CD8-positive, alpha-beta memory T cell (primary cell): ENCODE measurements at regions of chr20 and their contacts with region 1.

Region 1: DNA sequence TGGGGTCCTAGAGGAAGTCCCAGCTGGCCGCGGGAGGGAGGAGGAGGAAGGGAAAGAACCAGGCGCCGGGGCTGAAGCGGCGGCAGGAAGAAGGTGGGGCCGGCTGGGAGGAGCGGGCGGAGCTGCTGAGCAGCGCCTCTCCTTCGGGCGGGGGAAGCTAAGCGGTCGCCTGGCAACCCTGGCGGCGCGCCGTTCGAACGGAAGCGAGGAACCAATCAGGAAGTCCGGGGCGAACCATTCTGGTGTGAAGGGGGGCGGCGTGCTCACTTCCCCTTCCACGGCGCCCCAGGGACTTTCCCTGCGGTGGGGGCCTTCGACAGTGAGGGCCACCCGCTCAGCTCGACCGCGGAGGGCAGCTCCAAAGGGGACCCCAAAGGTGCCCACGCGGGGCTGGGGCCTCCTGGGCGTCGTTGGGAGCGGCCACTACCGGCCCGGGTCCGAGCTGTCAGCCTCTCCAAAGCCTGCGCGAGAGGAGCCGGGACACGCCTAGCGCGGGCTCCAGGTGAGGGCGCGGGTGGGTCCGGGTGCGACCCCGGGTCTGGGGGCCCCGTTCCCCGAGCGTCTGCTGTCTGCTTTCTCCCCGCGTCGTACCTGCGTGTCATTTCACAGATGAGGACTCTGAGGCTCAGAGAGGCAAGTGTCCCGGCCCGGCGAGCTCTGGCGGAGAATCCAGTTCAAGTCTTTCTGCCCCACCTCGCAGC is at the start of gene FAM110A:
- DNase-seq: peak; percentile 93 to 97 (median 95)
- H3K4me3 ChIP-seq: peak within 1 kb of the TSS; percentile 95
- H3K4me3 Mint-ChIP-seq: peak within 1 kb of the TSS; percentile 84 to 93 (median 89)
- H3K27ac ChIP-seq: peak within 1 kb of the TSS; percentile 94
- H3K27ac Mint-ChIP-seq: peak within 1 kb of the TSS; percentile 54 to 98 (median 94)
- H3K4me1 ChIP-seq: peaks cover 37% of the 10 kb centered on the region
- H3K4me1 Mint-ChIP-seq: peaks cover 41 to 53% (median 50%) of the 10 kb centered on the region in 3 donors
- H3K27me3 ChIP-seq: no peaks in the 10 kb centered on the region
- H3K27me3 Mint-ChIP-seq: no peaks in the 10 kb centered on the region
- total RNA-seq, gene FAM110A: 13.3 to 15.0 TPM

Region 2: GRCh38 chr20:844473-845225 is 11.0 kb after region 1 on chr20:
- CTCF ChIA-PET with region 1: interaction called, 45 read pairs
- POLR2A ChIA-PET with region 1: interaction called, 48 read pairs
- DNase-seq: peak; percentile 84 to 95 (median 90)
- H3K4me3 ChIP-seq: peak overlapping the region; percentile 83
- H3K4me3 Mint-ChIP-seq: peak overlapping the region; percentile 82 to 94 (median 92)
- H3K27ac ChIP-seq: peak overlapping the region; percentile 31
- H3K27ac Mint-ChIP-seq: peak overlapping the region; percentile 48 to 94 (median 86)
- H3K4me1 ChIP-seq: peaks cover 55% of the 10 kb centered on the region
- H3K4me1 Mint-ChIP-seq: peaks cover 42 to 67% (median 44%) of the 10 kb centered on the region in 3 donors
- H3K27me3 ChIP-seq: no peaks in the 10 kb centered on the region
- H3K27me3 Mint-ChIP-seq: peaks cover 0 to 2% of the 10 kb centered on the region in 2 donors

Region 3: DNA sequence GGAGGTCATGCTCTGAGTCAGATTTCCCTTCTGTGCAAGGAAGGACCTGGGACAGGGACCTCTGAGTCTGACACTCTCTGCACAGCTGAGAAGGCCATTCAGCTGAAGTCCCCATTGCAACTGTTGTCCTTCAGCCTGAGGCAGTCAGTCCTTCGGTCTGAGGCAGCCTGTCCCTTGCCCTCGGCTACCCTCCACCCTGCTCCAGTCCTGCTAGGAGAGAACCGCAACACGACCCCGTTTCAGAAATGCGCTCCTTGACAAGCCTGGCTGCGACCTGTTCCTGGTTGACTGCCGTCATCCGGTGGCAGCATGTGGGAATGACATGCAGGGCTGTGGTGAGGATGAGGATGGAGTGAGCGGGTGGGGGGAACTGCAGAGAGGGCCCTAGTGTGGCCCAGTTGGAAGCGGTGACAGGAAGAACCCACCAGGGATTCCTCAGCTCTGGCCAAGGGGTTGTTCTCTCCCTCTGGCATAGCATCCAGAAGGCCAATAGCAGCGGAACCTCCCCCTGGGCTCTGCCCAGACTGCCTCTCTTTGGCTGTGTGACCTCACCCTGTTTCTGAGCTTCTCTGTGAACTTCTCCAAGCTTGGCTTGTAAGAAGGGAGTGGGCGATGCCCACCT is 122.8 kb after region 1 on chr20:
- CTCF ChIA-PET with region 1: interaction called, 19 read pairs
- POLR2A ChIA-PET with region 1: no interaction called
- DNase-seq: peak; percentile 53 to 79 (median 64)
- H3K4me3 ChIP-seq: no peak overlapping the region
- H3K4me3 Mint-ChIP-seq: no peak overlapping the region
- H3K27ac ChIP-seq: no peak overlapping the region
- H3K27ac Mint-ChIP-seq: no peak overlapping the region
- H3K4me1 ChIP-seq: no peaks in the 10 kb centered on the region
- H3K4me1 Mint-ChIP-seq: peaks cover 0 to 4% (median 3%) of the 10 kb centered on the region in 3 donors
- H3K27me3 ChIP-seq: peaks cover 7% of the 10 kb centered on the region
- H3K27me3 Mint-ChIP-seq: peaks cover 28 to 71% of the 10 kb centered on the region in 2 donors

Region 4: GRCh38 chr20:1062334-1063010 is 228.9 kb after region 1 on chr20:
- CTCF ChIA-PET with region 1: no interaction called
- POLR2A ChIA-PET with region 1: no interaction called
- DNase-seq: no peak
- H3K4me3 ChIP-seq: no peak overlapping the region
- H3K4me3 Mint-ChIP-seq: no peak overlapping the region
- H3K27ac ChIP-seq: no peak overlapping the region
- H3K27ac Mint-ChIP-seq: no peak overlapping the region
- H3K4me1 ChIP-seq: no peaks in the 10 kb centered on the region
- H3K4me1 Mint-ChIP-seq: no peaks in the 10 kb centered on the region
- H3K27me3 ChIP-seq: no peaks in the 10 kb centered on the region
- H3K27me3 Mint-ChIP-seq: peaks cover 7 to 15% of the 10 kb centered on the region in 2 donors